ENCODE measurements at regions of chr3 and their contacts with region 1.

Region 1: GRCh38 chr3:53709860-53710674 is 136.2 kb downstream of the CHDH start:
- DNase-seq: peak; percentile 27 to 71 (median 36)
- ATAC-seq: peak; percentile 74
- H3K4me3 ChIP-seq: no peak overlapping the region
- H3K4me3 Mint-ChIP-seq: no peak overlapping the region
- H3K27ac ChIP-seq: no peak overlapping the region
- H3K27ac Mint-ChIP-seq: no peak overlapping the region
- H3K4me1 ChIP-seq: peaks cover 3% of the 10 kb centered on the region
- H3K4me1 Mint-ChIP-seq: no peaks in the 10 kb centered on the region
- H3K27me3 ChIP-seq: no peaks in the 10 kb centered on the region
- H3K27me3 Mint-ChIP-seq: no peaks in the 10 kb centered on the region
- CTCF ChIP-seq: peak; percentile 79

Region 2: GRCh38 chr3:53114011-53114400 is 596.1 kb before region 1 on chr3:
- CTCF ChIA-PET with region 1: no interaction called
- POLR2A ChIA-PET with region 1: no interaction called
- intact Hi-C with region 1: loop called (anchors 1 to 5 kb)
- DNase-seq: peak; percentile 65 to 90 (median 78)
- ATAC-seq: peak; percentile 71
- H3K4me3 ChIP-seq: no peak overlapping the region
- H3K4me3 Mint-ChIP-seq: no peak overlapping the region
- H3K27ac ChIP-seq: no peak overlapping the region
- H3K27ac Mint-ChIP-seq: no peak overlapping the region
- H3K4me1 ChIP-seq: peaks cover 20% of the 10 kb centered on the region
- H3K4me1 Mint-ChIP-seq: peaks cover 12% of the 10 kb centered on the region
- H3K27me3 ChIP-seq: no peaks in the 10 kb centered on the region
- H3K27me3 Mint-ChIP-seq: no peaks in the 10 kb centered on the region
- CTCF ChIP-seq: peak; percentile 92

Region 3: DNA sequence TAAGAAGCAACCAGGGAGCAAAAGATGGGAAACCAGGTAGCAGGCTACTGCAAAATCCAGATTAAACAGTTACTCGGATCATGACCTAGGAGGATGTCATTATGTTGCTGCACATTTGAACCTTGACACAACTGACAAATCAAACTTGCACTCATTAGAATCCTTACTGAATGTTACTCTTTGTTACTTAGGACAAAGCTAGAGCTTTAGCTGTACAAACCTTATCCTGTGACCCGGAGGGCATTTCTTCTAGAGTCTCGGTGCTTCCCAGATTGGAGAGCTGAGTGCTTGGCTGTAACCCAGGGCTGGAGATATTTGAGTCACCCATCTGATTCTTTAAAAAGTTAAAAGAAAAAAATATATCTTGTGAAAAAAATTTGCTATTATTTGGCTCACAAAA is 406.1 kb before region 1 on chr3:
- CTCF ChIA-PET with region 1: no interaction called
- POLR2A ChIA-PET with region 1: no interaction called
- intact Hi-C with region 1: loop called in 1 of 2 experiments (anchors 1 kb)
- DNase-seq: no peak
- ATAC-seq: no peak
- H3K4me3 ChIP-seq: no peak overlapping the region
- H3K4me3 Mint-ChIP-seq: no peak overlapping the region
- H3K27ac ChIP-seq: no peak overlapping the region
- H3K27ac Mint-ChIP-seq: no peak overlapping the region
- H3K4me1 ChIP-seq: no peaks in the 10 kb centered on the region
- H3K4me1 Mint-ChIP-seq: peaks cover 6% of the 10 kb centered on the region
- H3K27me3 ChIP-seq: no peaks in the 10 kb centered on the region
- H3K27me3 Mint-ChIP-seq: no peaks in the 10 kb centered on the region
- CTCF ChIP-seq: no peak

Region 4: DNA sequence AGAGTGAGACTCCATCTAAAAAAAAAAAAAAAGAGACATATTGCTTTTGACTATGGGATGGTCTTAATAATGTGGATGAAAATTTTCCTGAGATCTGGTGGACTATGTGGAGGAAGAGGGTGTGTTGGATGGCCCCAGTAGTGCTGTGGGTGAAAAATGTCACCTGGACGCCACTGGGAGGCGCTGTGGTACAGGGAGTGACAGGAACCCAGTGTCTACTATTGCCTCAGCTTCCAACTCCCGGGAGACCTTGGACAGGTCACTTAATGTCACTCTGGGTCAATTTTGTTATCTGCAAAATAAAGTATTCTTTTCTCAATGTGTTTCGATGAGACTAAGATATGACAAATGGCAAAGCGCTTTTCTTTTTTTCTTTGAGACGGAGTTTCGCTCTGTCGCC is 335.0 kb before region 1 on chr3:
- CTCF ChIA-PET with region 1: no interaction called
- POLR2A ChIA-PET with region 1: no interaction called
- intact Hi-C with region 1: loop called in 1 of 2 experiments (anchors 10 kb)
- DNase-seq: peak in 13 of 14 experiments; percentile 2 to 63 (median 16)
- ATAC-seq: no peak
- H3K4me3 ChIP-seq: no peak overlapping the region
- H3K4me3 Mint-ChIP-seq: no peak overlapping the region
- H3K27ac ChIP-seq: no peak overlapping the region
- H3K27ac Mint-ChIP-seq: no peak overlapping the region
- H3K4me1 ChIP-seq: no peaks in the 10 kb centered on the region
- H3K4me1 Mint-ChIP-seq: no peaks in the 10 kb centered on the region
- H3K27me3 ChIP-seq: peaks cover 0 to 6% of the 10 kb centered on the region in 2 experiments
- H3K27me3 Mint-ChIP-seq: peaks cover 53% of the 10 kb centered on the region
- CTCF ChIP-seq: peak; percentile 25